Motor neuron (in vitro differentiated cells): ENCODE measurements at regions of chr5 and their contacts with region 1.

Region 1: GRCh38 chr5:134145779-134146581 is 30.8 kb downstream of the SKP1 start:
- ATAC-seq: peak; percentile 73 to 90 (median 86)
- H3K4me3 ChIP-seq: no peak overlapping the region
- H3K27ac ChIP-seq: no peak overlapping the region
- H3K4me1 ChIP-seq: no peaks in the 10 kb centered on the region

Region 2: DNA sequence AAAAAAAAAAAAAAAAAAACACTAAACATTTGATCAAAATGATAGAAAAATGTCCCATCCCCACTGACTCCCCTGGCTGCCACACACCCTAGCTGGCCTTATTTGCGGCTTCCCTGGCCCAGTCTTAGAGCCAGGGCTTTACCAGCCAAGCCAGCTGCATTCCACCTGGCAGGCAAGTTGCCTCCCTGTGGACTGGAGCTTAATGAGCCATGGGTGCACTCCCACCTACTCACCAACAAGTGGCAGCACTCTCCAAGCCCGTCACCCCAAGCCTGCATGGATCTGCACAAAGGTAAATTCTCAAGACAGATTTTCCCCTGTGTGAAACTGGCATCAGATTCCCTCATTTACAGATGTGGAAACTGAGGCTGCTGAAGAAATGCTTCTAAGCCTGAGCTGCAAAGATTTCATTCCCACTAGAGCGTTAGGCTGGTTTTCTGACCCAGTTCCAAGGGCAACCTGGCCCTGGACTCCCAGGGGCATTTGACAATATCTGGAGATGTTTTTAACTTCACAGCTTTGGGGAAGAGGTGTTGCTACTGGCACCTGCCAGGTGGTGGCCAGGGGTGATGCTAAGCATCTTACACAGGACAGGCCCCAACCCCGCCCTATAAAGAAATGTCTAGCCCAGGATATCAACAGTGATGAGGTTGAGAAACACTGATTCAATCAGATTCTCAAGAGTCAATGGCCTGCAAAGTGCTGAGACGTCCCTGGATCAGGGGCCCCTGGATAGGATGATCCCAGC is 119.3 kb before region 1 on chr5:
- in situ Hi-C with region 1: loop called in 5 of 9 experiments (anchors 10 to 25 kb)
- ATAC-seq: peak; percentile 39 to 99 (median 66)
- H3K4me3 ChIP-seq: no peak overlapping the region
- H3K27ac ChIP-seq: no peak overlapping the region
- H3K4me1 ChIP-seq: no peaks in the 10 kb centered on the region

Region 3: DNA sequence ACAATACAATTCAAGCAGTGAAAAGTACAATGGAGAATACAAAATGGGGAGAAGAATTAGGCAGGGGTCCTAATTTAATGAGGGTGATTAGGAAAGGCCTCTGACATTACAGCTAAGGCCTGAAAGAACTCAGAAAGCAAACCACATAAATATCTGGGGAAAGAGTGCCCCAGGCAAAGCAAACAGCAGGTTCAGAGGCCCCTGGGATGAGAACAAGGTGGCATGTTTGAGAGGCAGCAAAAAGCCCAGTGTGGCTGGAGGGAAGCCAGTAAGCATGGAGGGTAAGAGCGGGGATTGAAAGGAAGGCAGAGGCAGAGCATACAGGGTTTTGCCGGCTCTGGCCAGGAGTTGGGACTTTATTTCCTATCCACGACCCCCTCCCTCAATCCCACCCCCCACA is 107.8 kb before region 1 on chr5:
- in situ Hi-C with region 1: loop called in 5 of 9 experiments (anchors 10 to 25 kb)
- ATAC-seq: peak in 1 of 8 experiments; percentile 70
- H3K4me3 ChIP-seq: no peak overlapping the region
- H3K27ac ChIP-seq: no peak overlapping the region
- H3K4me1 ChIP-seq: no peaks in the 10 kb centered on the region